Activated B cell treated with CpG ODN at 0.5 μM for 24 hours (primary cell): ENCODE measurements at regions of chr3 and their contacts with region 1.

Region 1: GRCh38 chr3:13884851-13885703 is 5.2 kb upstream of the WNT7A start:
- DNase-seq: no peak
- ATAC-seq: peak; percentile 54
- H3K4me3 Mint-ChIP-seq: no peak overlapping the region
- H3K27ac Mint-ChIP-seq: no peak overlapping the region
- H3K4me1 Mint-ChIP-seq: peaks cover 2% of the 10 kb centered on the region
- H3K27me3 Mint-ChIP-seq: peaks cover 32% of the 10 kb centered on the region
- CTCF ChIP-seq: no peak

Region 2: GRCh38 chr3:13495921-13496723 is 389.0 kb before region 1 on chr3:
- CTCF ChIA-PET with region 1: no interaction called
- POLR2A ChIA-PET with region 1: no interaction called
- intact Hi-C with region 1: loop called (anchors 10 kb)
- DNase-seq: peak; percentile 53
- ATAC-seq: peak; percentile 91
- H3K4me3 Mint-ChIP-seq: no peak overlapping the region
- H3K27ac Mint-ChIP-seq: no peak overlapping the region
- H3K4me1 Mint-ChIP-seq: no peaks in the 10 kb centered on the region
- H3K27me3 Mint-ChIP-seq: peaks cover 1% of the 10 kb centered on the region
- CTCF ChIP-seq: peak; percentile 41

Region 3: DNA sequence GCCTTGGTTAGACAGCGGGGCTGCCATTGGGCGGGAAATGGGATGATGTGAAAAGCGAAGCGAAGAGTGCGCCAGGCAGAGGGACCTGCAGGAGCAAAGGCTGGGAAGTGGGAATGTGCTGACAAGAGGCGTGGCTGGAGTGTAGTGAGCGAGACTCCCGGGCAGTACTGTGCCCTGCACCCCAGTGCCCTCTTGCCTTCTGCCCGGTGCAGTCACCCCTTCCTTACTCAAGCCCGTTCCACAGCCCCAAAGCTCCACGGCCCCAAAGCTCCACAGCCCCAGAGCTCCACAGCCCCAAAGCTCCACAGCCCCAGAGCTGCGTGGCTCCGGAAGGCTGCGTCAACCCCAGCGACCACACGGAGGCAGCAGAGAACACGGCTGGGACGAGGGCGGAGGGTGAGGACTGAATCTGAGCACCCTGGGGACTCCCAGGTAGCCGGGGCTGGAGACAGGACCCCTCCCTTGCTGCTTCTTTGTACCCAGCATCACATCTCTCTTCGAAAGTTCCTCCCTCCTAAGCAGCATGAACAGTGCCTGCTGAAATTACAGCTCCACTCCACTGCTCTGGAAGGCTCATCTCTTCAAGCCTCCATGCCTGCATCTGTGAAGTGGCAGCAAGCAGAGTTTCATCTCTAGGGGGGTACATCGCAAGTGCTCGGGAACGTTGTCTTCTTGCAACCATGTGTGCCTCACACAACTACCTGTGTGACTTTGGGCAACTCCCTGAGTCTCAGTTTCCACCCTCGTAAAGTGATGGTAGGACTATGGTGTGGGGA is 227.2 kb before region 1 on chr3:
- CTCF ChIA-PET with region 1: interaction called, 4 read pairs
- POLR2A ChIA-PET with region 1: no interaction called
- intact Hi-C with region 1: loop called (anchors 1 kb)
- DNase-seq: peak; percentile 46
- ATAC-seq: peak; percentile 86
- H3K4me3 Mint-ChIP-seq: no peak overlapping the region
- H3K27ac Mint-ChIP-seq: no peak overlapping the region
- H3K4me1 Mint-ChIP-seq: peaks cover 4% of the 10 kb centered on the region
- H3K27me3 Mint-ChIP-seq: peaks cover 43% of the 10 kb centered on the region
- CTCF ChIP-seq: no peak